Caco-2 (cell line): ENCODE measurements at regions of chr1 and their contacts with region 1.

Region 1: DNA sequence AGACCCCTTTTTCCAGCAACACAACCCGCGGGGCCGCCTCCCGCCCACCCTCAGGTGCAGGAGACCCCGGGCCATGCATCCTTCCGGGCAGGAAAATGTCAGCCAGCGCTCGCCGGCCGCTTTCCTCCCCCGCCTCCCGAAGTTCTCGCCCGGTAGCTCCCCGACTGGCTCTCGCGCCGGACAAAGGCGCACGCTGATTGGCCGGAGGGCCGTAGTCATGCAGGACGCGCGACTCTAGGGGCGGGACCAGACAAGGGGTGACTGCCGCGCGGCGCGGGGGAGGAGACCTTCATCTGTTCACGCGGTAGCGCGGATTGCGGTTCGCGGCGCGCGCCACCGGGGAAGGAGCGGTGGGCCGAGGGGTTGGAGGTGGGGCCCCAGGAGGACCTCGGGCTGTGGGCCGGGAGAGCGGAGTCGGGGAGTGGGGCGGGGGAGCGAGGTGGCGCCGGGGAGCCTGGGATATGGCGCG is at the start of gene FLVCR1:
- DNase-seq: peak; percentile 99
- H3K4me3 ChIP-seq: peak within 1 kb of the TSS; percentile 59
- H3K4me3 Mint-ChIP-seq: no peak within 1 kb of the TSS
- H3K27ac Mint-ChIP-seq: peak within 1 kb of the TSS; percentile 81
- H3K4me1 ChIP-seq: peaks cover 14% of the 10 kb centered on the region
- H3K4me1 Mint-ChIP-seq: peaks cover 16% of the 10 kb centered on the region
- H3K27me3 ChIP-seq: no peaks in the 10 kb centered on the region
- H3K27me3 Mint-ChIP-seq: no peaks in the 10 kb centered on the region
- CTCF ChIP-seq: no peak
- total RNA-seq, gene FLVCR1: 30.8 and 36.3 TPM in 2 replicates

Region 2: GRCh38 chr1:211830330-211831142 is 1027.5 kb before region 1 on chr1 and contains the start of gene LPGAT1:
- CTCF ChIA-PET with region 1: no interaction called
- POLR2A ChIA-PET with region 1: interaction called, 12 read pairs
- intact Hi-C with region 1: no loop called
- DNase-seq: peak; percentile 70 to 87
- H3K4me3 ChIP-seq: peak within 1 kb of the TSS; percentile 56
- H3K4me3 Mint-ChIP-seq: peak within 1 kb of the TSS; percentile 96
- H3K27ac Mint-ChIP-seq: peak within 1 kb of the TSS; percentile 76
- H3K4me1 ChIP-seq: no peaks in the 10 kb centered on the region
- H3K4me1 Mint-ChIP-seq: peaks cover 5% of the 10 kb centered on the region
- H3K27me3 ChIP-seq: no peaks in the 10 kb centered on the region
- H3K27me3 Mint-ChIP-seq: no peaks in the 10 kb centered on the region
- CTCF ChIP-seq: peak; percentile 49 to 55
- total RNA-seq, gene LPGAT1: 25.6 and 34.0 TPM in 2 replicates

Region 3: DNA sequence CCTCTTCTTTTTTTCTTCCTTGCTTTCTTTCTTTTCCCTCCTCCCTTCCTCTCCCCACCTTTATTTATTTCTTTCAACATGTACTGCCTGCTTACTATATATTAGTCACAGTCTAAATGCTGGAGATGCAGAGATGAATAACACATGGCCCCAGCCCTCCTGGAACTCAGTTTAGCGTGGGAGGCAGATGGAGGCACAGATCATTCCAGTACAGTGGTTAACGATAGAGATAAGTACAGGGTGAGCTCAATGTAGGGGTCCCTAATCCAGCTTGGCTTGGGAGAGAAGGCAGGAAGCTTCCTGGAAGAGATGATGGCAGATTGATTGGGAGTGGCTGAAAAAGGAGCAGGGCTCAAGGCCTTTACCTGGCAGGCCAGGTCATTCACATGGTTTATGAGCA is 628.4 kb before region 1 on chr1:
- CTCF ChIA-PET with region 1: no interaction called
- POLR2A ChIA-PET with region 1: no interaction called
- intact Hi-C with region 1: no loop called
- DNase-seq: no peak
- H3K4me3 ChIP-seq: no peak overlapping the region
- H3K4me3 Mint-ChIP-seq: no peak overlapping the region
- H3K27ac Mint-ChIP-seq: no peak overlapping the region
- H3K4me1 ChIP-seq: 0 out of 2 replicates have a peak, but pooled peaks cover 8% of the 10 kb centered on the region
- H3K4me1 Mint-ChIP-seq: peaks cover 33% of the 10 kb centered on the region
- H3K27me3 ChIP-seq: no peaks in the 10 kb centered on the region
- H3K27me3 Mint-ChIP-seq: no peaks in the 10 kb centered on the region
- CTCF ChIP-seq: no peak

Region 4: DNA sequence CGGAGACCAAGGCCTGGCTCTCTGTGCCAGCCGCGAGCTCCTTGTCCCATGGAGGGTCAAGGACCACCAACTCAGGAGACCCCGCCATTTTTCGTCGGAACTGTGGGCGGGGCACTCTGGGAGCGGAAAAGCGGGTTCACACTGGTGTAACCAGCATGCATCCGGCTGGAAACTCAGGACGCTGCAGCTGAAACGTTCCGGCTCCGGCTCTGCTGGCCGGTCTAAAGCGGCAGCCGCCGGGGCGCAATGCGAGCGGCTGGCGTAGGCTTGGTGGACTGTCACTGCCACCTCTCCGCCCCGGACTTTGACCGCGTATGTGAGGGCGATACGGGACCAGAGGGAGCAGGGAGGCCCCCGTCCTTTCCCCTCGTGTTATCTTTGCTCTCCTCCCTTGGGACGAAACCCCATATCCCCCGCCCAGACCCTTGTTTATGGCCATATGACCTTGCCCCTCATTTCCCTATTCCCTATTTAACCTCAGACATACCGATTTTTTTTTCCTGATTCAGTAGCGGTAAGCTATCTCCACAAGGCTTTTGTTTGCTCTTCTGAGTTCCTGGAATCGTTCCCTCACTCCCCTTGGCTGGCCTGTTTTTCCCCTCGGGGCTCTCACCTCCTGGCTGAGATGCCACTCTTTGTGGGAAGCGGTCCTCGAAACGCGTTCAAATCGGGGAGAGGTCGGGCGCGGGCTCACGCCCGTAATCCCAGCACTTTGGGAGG is 66.2 kb before region 1 on chr1 and contains the starts of genes NSL1 and TATDN3:
- CTCF ChIA-PET with region 1: interaction called, 8 read pairs
- POLR2A ChIA-PET with region 1: interaction called, 16 read pairs
- intact Hi-C with region 1: loop called (anchors 1 kb)
- DNase-seq: peak; percentile 97 to 99
- H3K4me3 ChIP-seq: peak within 1 kb of the TSS; percentile 88
- H3K4me3 Mint-ChIP-seq: peak within 1 kb of the TSS; percentile 94
- H3K27ac Mint-ChIP-seq: peak within 1 kb of the TSS; percentile 97
- H3K4me1 ChIP-seq: peaks cover 16% of the 10 kb centered on the region
- H3K4me1 Mint-ChIP-seq: peaks cover 25% of the 10 kb centered on the region
- H3K27me3 ChIP-seq: no peaks in the 10 kb centered on the region
- H3K27me3 Mint-ChIP-seq: no peaks in the 10 kb centered on the region
- CTCF ChIP-seq: no peak
- total RNA-seq, gene NSL1: 35.9 and 45.6 TPM in 2 replicates
- total RNA-seq, gene TATDN3: 9.6 and 12.4 TPM in 2 replicates

Region 5: GRCh38 chr1:212814537-212815334 is 43.3 kb before region 1 on chr1:
- CTCF ChIA-PET with region 1: interaction called, 10 read pairs
- POLR2A ChIA-PET with region 1: interaction called, 8 read pairs
- intact Hi-C with region 1: loop called (anchors 2 kb)
- DNase-seq: peak in 1 of 2 experiments; percentile 41
- H3K4me3 ChIP-seq: no peak overlapping the region
- H3K4me3 Mint-ChIP-seq: no peak overlapping the region
- H3K27ac Mint-ChIP-seq: no peak overlapping the region
- H3K4me1 ChIP-seq: peaks cover 7% of the 10 kb centered on the region
- H3K4me1 Mint-ChIP-seq: peaks cover 12% of the 10 kb centered on the region
- H3K27me3 ChIP-seq: no peaks in the 10 kb centered on the region
- H3K27me3 Mint-ChIP-seq: no peaks in the 10 kb centered on the region
- CTCF ChIP-seq: peak; percentile 11 to 36

Region 6: GRCh38 chr1:212827824-212828278 is 30.2 kb before region 1 on chr1:
- CTCF ChIA-PET with region 1: interaction called, 7 read pairs
- POLR2A ChIA-PET with region 1: interaction called, 22 read pairs
- intact Hi-C with region 1: loop called (anchors 2 kb)
- DNase-seq: peak; percentile 65 to 90
- H3K4me3 ChIP-seq: no peak overlapping the region
- H3K4me3 Mint-ChIP-seq: peak overlapping the region; percentile 58
- H3K27ac Mint-ChIP-seq: peak overlapping the region; percentile 79
- H3K4me1 ChIP-seq: peaks cover 30% of the 10 kb centered on the region
- H3K4me1 Mint-ChIP-seq: peaks cover 20% of the 10 kb centered on the region
- H3K27me3 ChIP-seq: no peaks in the 10 kb centered on the region
- H3K27me3 Mint-ChIP-seq: no peaks in the 10 kb centered on the region
- CTCF ChIP-seq: no peak

Region 7: GRCh38 chr1:212873518-212873917 is 15.5 kb after region 1 on chr1:
- CTCF ChIA-PET with region 1: no interaction called
- POLR2A ChIA-PET with region 1: interaction called, 11 read pairs
- intact Hi-C with region 1: no loop called
- DNase-seq: no peak
- H3K4me3 ChIP-seq: no peak overlapping the region
- H3K4me3 Mint-ChIP-seq: no peak overlapping the region
- H3K27ac Mint-ChIP-seq: no peak overlapping the region
- H3K4me1 ChIP-seq: no peaks in the 10 kb centered on the region
- H3K4me1 Mint-ChIP-seq: no peaks in the 10 kb centered on the region
- H3K27me3 ChIP-seq: no peaks in the 10 kb centered on the region
- H3K27me3 Mint-ChIP-seq: no peaks in the 10 kb centered on the region
- CTCF ChIP-seq: no peak

Region 8: DNA sequence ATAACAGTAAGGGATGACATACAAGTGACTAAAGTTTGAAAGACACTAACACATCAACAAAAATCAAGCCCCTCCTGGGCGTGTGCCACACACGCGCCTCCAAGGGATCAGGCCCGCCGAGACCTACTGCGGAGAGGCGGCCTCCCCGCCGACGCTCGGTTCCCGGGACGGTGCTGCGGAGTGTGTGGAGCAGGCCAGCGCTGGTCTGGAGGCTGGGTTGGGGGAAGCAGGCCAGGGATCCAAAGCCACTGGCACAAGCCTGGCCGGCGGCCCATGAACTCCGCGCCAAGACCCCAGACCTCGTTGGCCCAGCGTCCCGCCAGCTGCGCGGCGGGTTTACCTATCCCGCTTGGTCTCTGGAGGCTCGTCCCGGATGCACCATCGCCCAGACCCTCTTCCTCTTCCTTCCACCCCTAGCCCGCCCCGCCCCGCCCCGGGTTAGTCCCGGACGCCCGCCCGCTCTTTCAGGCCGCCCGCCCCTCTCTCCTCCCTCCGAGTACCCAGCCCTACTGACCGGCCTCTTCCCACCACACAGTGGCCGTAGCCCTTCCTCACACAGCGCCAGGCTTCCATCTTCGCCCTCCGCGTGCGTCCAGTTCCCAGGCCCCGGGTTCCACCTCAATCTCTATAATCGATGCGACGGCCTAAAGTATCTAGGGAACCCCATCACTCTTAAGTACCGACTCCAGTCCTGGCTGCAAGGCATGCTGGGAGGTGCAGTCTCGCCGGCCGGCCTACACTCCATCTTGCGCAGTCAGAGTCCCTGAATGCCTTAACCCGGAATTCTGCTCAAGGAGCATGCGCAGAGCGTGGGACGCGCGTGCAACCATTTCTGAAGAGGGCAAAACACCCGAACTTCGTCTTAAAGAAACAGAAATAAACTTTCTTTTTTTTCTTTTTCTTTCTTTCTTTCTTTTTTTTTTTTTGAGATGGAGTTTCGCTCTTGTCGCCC is 157.3 kb after region 1 on chr1 and contains the start of gene ANGEL2:
- CTCF ChIA-PET with region 1: no interaction called
- POLR2A ChIA-PET with region 1: no interaction called
- intact Hi-C with region 1: loop called (anchors 5 kb)
- DNase-seq: peak; percentile 95 to 97
- H3K4me3 ChIP-seq: peak within 1 kb of the TSS; percentile 87
- H3K4me3 Mint-ChIP-seq: peak within 1 kb of the TSS; percentile 95
- H3K27ac Mint-ChIP-seq: peak within 1 kb of the TSS; percentile 87
- H3K4me1 ChIP-seq: peaks cover 3% of the 10 kb centered on the region; the same call in 1 of the 2 replicates
- H3K4me1 Mint-ChIP-seq: no peaks in the 10 kb centered on the region
- H3K27me3 ChIP-seq: no peaks in the 10 kb centered on the region
- H3K27me3 Mint-ChIP-seq: no peaks in the 10 kb centered on the region
- CTCF ChIP-seq: no peak
- total RNA-seq, gene ANGEL2: 33.8 and 34.8 TPM in 2 replicates